AG04450 (cell line): ENCODE measurements at regions of chr20 and their contacts with region 1.

Region 1: GRCh38 chr20:23050847-23051631 is 1.6 kb upstream of the THBD start:
- DNase-seq: peak; percentile 27
- H3K4me3 ChIP-seq: peak overlapping the region; percentile 56
- H3K27ac ChIP-seq: no peak overlapping the region
- H3K27me3 ChIP-seq: peaks cover 63% of the 10 kb centered on the region
- CTCF ChIP-seq: peak; percentile 75

Region 2: GRCh38 chr20:23061734-23062561 is 10.9 kb after region 1 on chr20:
- CTCF ChIA-PET with region 1: interaction called, 34 read pairs
- POLR2A ChIA-PET with region 1: interaction called, 3 read pairs
- DNase-seq: peak; percentile 21
- H3K4me3 ChIP-seq: no peak overlapping the region
- H3K27ac ChIP-seq: no peak overlapping the region
- H3K27me3 ChIP-seq: peaks cover 7% of the 10 kb centered on the region
- CTCF ChIP-seq: peak; percentile 63

Region 3: GRCh38 chr20:23235173-23236027 is 184.4 kb after region 1 on chr20:
- CTCF ChIA-PET with region 1: interaction called, 16 read pairs
- POLR2A ChIA-PET with region 1: no interaction called
- DNase-seq: no peak
- H3K4me3 ChIP-seq: no peak overlapping the region
- H3K27ac ChIP-seq: no peak overlapping the region
- H3K27me3 ChIP-seq: peaks cover 6% of the 10 kb centered on the region
- CTCF ChIP-seq: peak; percentile 77

Region 4: DNA sequence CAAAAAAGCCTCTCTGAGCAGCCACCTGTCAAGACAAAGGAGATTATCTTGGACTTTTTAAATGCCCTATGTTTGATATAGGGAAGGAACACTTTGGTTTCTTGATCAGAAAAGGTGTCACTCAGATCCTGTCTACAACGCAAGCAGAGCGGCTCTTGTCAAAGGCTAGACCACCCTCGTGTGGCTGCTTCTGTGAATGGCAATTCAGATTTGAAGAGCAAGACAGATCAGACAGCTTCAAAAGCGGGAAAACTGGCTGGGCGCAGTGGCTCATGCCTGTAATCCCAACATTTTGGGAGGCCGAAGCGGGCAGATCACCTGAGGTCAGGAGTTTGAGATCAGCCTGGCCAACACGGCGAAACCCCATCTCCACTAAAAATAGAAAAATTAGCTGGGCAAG is 289.5 kb after region 1 on chr20:
- CTCF ChIA-PET with region 1: interaction called, 34 read pairs
- POLR2A ChIA-PET with region 1: interaction called, 3 read pairs
- DNase-seq: no peak
- H3K4me3 ChIP-seq: no peak overlapping the region
- H3K27ac ChIP-seq: no peak overlapping the region
- H3K27me3 ChIP-seq: peaks cover 2% of the 10 kb centered on the region
- CTCF ChIP-seq: peak; percentile 77

Region 5: DNA sequence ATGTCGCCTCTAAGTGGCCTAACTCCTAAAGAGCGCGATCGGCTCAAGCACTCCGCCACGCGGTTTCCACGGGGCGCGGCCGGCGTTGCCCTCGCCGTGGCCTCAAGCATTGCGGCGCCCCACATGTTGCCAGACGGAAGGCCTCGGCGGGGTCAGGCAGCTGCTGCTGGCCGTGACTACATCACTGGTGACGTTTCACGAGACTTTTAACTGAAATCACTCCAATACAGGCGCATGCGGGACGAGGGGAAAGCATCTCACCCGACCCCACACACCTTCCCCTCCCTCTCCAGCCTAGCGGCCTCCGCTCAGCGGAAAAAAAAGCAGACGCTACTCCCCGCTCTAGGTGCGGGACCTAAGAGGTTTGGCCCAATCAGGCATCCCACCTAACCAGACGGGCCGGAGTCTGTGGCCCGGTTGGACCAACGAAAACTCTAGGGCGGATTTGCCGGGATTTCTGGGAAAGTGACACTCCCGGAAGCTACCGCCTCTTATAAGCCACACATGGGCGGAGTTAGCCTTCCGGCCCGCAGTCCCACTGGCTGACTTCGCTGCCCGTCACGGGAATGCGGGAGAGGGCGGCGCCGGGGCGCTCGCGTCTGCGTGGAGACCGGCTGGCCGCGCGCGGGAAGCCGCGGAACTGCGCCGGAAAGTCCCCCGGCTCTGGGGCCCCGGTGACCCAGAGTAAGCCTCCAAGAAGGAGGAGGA is 299.3 kb after region 1 on chr20 and contains the start of gene NXT1:
- CTCF ChIA-PET with region 1: interaction called, 14 read pairs
- POLR2A ChIA-PET with region 1: interaction called, 4 read pairs
- DNase-seq: peak; percentile 97
- H3K4me3 ChIP-seq: peak within 1 kb of the TSS; percentile 90
- H3K27ac ChIP-seq: peak within 1 kb of the TSS; percentile 99
- H3K27me3 ChIP-seq: no peaks in the 10 kb centered on the region
- CTCF ChIP-seq: no peak
- polyA plus RNA-seq, gene NXT1: 17.9 and 19.5 TPM in 2 replicates

Region 6: DNA sequence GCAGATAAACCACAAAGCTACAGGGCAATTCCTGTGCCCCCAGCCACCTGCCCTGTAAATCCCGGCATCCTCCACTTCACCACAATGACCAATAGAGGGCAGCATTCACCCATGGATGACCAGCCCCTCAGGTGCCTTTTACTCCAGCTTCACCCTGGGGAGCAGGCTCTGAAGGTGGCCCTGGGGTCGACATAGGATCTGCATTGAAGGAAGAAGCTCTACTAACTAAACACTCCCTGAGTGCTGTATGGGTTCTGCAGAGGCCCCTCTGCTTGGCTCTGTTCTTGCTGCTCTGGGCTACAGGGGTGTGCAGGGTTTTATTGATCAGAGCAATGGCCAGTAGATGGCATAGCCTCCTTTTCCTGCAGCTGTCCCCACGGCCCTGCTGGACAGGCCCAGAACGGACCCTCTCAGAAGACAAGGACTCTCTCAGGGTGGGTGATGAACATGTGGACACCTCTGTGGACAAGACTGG is 617.5 kb after region 1 on chr20:
- CTCF ChIA-PET with region 1: no interaction called
- POLR2A ChIA-PET with region 1: no interaction called
- DNase-seq: no peak
- H3K4me3 ChIP-seq: no peak overlapping the region
- H3K27ac ChIP-seq: no peak overlapping the region
- H3K27me3 ChIP-seq: no peaks in the 10 kb centered on the region
- CTCF ChIP-seq: peak; percentile 78